ENCODE measurements at regions of chr21 and their contacts with region 1.

Region 1: GRCh38 chr21:25421327-25422028 is 185.8 kb downstream of the MRPL39 start:
- DNase-seq: peak; percentile 82
- ATAC-seq: peak; percentile 96
- H3K4me3 Mint-ChIP-seq: peak overlapping the region; percentile 59
- H3K27ac Mint-ChIP-seq: peak overlapping the region; percentile 94
- H3K4me1 Mint-ChIP-seq: peaks cover 74% of the 10 kb centered on the region
- H3K27me3 Mint-ChIP-seq: no peaks in the 10 kb centered on the region

Region 2: DNA sequence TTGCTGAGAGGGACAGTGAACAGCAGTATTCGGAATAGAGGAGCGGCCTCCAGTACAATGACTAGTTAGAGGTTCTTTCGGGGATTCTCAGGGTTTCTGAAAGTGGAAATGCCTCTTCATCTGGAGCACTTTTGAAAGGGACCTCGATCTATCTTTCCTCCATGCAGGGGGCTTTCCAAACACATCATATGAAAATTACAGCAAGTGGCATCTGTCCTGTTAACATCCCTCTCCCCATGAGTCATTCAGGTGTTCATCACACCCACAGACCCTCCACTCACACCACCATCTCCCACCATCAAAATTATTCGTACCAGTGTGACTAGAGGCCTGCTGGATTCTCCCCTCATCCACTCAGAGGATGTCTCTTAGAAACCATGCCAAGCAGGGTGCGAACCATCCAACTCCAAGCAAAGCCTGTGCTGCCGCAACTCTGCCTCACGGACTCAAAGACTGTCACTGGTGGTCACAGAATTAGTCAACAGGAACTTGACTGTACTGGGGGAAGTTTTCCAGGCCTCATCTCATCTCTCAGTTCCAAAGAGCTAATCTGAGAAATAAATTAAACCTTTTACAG is 25.3 kb before region 1 on chr21:
- CTCF ChIA-PET with region 1: interaction called, 5 read pairs
- POLR2A ChIA-PET with region 1: interaction called, 5 read pairs
- intact Hi-C with region 1: loop called (anchors 1 kb)
- DNase-seq: peak; percentile 89
- ATAC-seq: peak; percentile 98
- H3K4me3 Mint-ChIP-seq: peak overlapping the region; percentile 54
- H3K27ac Mint-ChIP-seq: peak overlapping the region; percentile 93
- H3K4me1 Mint-ChIP-seq: peaks cover 31% of the 10 kb centered on the region
- H3K27me3 Mint-ChIP-seq: no peaks in the 10 kb centered on the region

Region 3: GRCh38 chr21:25487046-25487594 is 65.6 kb after region 1 on chr21:
- CTCF ChIA-PET with region 1: interaction called, 5 read pairs
- POLR2A ChIA-PET with region 1: interaction called, 4 read pairs
- intact Hi-C with region 1: loop called (anchors 1 kb)
- DNase-seq: no peak
- ATAC-seq: peak; percentile 75
- H3K4me3 Mint-ChIP-seq: peak overlapping the region; percentile 57
- H3K27ac Mint-ChIP-seq: peak overlapping the region; percentile 90
- H3K4me1 Mint-ChIP-seq: peaks cover 81% of the 10 kb centered on the region
- H3K27me3 Mint-ChIP-seq: no peaks in the 10 kb centered on the region

Region 4: DNA sequence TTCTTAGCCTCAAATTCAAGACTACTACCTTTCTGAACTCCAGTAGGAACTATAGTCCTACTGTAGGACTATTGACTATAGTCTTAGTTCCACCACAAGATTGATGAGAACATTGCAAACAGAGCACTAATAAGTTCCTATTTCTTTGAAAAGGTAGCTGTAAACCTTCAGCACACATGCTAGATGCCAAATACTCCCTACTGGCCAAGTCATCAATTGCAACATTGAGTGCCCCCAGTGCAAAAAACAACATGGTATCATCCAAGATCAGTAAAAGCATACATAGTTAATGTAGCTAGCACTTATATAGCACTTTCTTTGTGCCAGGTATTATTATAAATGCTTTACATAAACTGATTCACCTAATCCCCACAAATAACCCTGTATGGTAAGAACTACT is 86.0 kb after region 1 on chr21:
- CTCF ChIA-PET with region 1: interaction called, 10 read pairs
- POLR2A ChIA-PET with region 1: interaction called, 4 read pairs
- intact Hi-C with region 1: loop called (anchors 1 to 2 kb)
- DNase-seq: peak; percentile 42
- ATAC-seq: peak; percentile 37
- H3K4me3 Mint-ChIP-seq: peak overlapping the region; percentile 66
- H3K27ac Mint-ChIP-seq: peak overlapping the region; percentile 86
- H3K4me1 Mint-ChIP-seq: peaks cover 75% of the 10 kb centered on the region
- H3K27me3 Mint-ChIP-seq: no peaks in the 10 kb centered on the region

Region 5: GRCh38 chr21:25568246-25568645 is 146.8 kb after region 1 on chr21:
- CTCF ChIA-PET with region 1: interaction called, 14 read pairs
- POLR2A ChIA-PET with region 1: interaction called, 4 read pairs
- intact Hi-C with region 1: loop called (anchors 1 to 2 kb)
- DNase-seq: peak; percentile 55
- ATAC-seq: no peak
- H3K4me3 Mint-ChIP-seq: peak overlapping the region; percentile 93
- H3K27ac Mint-ChIP-seq: peak overlapping the region; percentile 100
- H3K4me1 Mint-ChIP-seq: peaks cover 37% of the 10 kb centered on the region
- H3K27me3 Mint-ChIP-seq: no peaks in the 10 kb centered on the region

Region 6: DNA sequence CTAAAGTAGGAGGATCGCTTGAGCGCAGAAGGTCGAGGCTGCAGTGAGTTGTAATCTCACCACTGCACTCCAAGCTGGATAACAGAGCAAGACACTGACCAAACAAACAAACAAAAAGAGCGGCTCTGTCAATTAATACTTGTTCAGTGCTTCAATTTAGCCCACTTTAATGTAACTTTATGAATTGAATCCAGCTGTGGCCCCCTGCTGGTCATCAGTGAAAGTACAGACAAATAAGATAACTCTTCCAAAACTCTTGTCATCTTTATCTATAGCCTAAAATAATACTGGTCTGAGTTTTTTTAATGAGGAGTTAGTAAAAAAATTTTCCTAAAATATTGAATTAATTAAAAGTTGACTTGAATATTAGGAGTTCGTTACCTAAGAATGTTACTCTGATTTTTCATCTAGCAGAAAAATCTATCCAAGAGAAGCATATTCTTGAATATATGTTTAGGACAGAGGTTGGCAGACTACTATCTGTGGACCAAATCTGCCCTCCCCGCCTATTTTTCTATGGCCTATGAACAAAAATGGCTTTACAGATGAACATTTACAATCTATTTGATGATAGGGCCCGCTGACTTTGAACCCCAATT is 287.1 kb after region 1 on chr21:
- CTCF ChIA-PET with region 1: no interaction called
- POLR2A ChIA-PET with region 1: no interaction called
- intact Hi-C with region 1: loop called in 1 of 2 experiments (anchors 2 kb)
- DNase-seq: peak; percentile 60
- ATAC-seq: no peak
- H3K4me3 Mint-ChIP-seq: no peak overlapping the region
- H3K27ac Mint-ChIP-seq: no peak overlapping the region
- H3K4me1 Mint-ChIP-seq: no peaks in the 10 kb centered on the region
- H3K27me3 Mint-ChIP-seq: no peaks in the 10 kb centered on the region